Aorta (tissue), 5 donors: ENCODE measurements at regions of chr13 and their contacts with region 1.

Region 1: DNA sequence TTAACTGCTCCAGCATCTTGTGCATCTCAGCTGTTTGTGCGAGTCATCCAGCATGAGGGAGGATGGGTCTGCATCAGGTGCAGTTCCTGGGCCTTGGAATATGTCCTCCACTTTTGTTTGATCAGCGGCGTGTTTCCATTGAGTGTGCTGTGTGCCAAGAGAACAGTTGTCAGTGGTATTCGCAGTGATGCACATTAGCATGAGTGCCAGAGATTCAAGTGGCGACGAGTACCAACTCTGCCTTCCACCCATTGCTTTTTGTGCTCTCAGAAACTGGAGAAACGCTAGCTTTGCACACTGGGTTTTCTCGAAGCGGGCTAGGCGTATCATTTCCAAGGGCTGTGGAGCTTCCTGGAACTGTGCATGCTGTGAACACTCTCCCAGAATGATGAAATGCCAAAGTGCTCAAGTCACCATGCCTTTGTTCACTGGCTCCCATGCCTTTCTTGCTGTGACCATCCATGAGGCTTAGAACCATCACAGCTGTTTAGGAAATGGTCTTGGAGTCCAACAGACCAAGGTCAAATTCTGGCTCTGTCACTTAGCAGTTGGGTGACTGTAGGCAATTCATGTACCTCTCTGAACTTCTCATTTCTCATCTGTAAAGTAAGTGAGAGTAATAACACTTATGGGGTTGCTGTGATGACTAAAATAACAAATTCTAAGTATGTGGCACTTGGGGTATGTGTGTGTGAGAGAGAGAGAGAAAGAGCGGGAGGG is 18.4 kb downstream of the LRCH1 start:
- DNase-seq: no peak
- ATAC-seq: peak; percentile 69
- H3K4me3 ChIP-seq: no peak overlapping the region
- H3K27ac ChIP-seq: peak overlapping the region; percentile 6 to 99
- H3K4me1 ChIP-seq: peaks cover 8 to 12% of the 10 kb centered on the region in 2 donors
- H3K27me3 ChIP-seq: no peaks in the 10 kb centered on the region

Region 2: DNA sequence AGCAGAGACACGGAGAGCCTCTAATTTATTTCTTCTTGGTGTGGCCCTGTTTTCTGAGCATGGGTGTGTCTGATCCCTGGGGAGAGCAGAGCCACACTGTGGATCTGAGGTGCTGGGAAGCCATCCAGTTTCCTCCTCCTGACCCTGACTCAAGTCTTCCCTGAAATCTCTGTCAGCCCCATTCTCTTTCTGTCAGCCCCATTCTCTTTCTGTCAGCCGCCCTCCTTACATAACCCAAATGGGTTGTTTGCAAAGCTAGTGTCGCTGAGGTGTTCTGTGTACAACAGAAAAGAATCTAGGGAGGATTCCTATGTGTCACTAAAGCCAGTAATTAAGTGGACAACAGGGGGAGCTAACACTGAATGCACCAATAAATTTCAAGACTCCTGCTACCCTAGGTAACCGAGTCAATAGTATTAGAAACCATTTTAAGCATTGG is 31.8 kb after region 1 on chr13:
- intact Hi-C with region 1: loop called in 1 of 2 experiments (anchors 5 kb)
- DNase-seq: no peak
- ATAC-seq: no peak
- H3K4me3 ChIP-seq: no peak overlapping the region
- H3K27ac ChIP-seq: no peak overlapping the region
- H3K4me1 ChIP-seq: peaks cover 11 to 30% of the 10 kb centered on the region in 2 donors
- H3K27me3 ChIP-seq: no peaks in the 10 kb centered on the region

Region 3: DNA sequence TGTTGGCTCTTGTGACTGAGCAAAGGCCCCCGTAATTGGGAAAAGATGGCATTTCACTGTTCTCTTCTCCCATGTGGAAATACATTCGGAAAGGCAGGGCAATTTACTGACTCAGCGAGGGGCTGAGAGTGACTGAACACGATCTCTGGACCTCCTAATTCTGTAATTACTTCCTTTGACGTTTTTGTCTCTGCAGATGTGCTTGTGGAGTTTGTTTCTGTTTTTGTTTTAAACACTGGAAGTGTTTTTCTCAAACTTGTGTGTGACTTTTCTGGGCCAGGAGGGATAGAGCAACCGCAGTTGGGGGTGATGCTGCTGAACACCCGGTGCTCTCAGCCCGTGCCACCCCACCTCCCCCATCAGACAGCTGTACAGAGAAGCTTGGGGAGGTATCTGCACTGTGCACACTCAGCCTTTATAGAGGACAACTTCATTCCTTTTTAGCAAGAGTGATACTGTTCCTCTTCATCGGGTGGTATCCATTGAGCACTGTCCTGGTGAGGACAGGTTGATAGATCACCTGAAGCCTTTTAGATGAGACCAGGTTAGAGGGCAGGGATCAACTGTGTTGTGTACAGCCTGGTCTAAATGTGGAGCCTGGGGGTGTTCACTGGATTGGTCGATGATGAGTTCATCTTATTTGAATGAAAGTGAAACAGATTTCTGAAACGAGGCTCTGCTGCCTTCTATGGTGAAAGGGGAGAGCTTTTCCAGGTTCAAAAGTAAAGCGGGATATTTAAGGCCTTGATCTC is 108.2 kb after region 1 on chr13:
- intact Hi-C with region 1: loop called in 1 of 2 experiments (anchors 5 kb)
- DNase-seq: no peak
- ATAC-seq: peak; percentile 84
- H3K4me3 ChIP-seq: peak overlapping the region; percentile 29 to 85
- H3K27ac ChIP-seq: peak overlapping the region; percentile 51 to 69
- H3K4me1 ChIP-seq: peaks cover 4 to 11% of the 10 kb centered on the region in 2 donors
- H3K27me3 ChIP-seq: no peaks in the 10 kb centered on the region